ENCODE measurements at regions of chr1 and their contacts with region 1.

Region 1: GRCh38 chr1:179954493-179955297 is at the start of gene CEP350:
- DNase-seq: peak; percentile 93 to 99 (median 98)
- ATAC-seq: peak; percentile 92
- H3K4me3 ChIP-seq: peak within 1 kb of the TSS; percentile 67
- H3K4me3 Mint-ChIP-seq: peak within 1 kb of the TSS; percentile 81 to 97 (median 93)
- H3K27ac ChIP-seq: peak within 1 kb of the TSS; percentile 95
- H3K27ac Mint-ChIP-seq: peak within 1 kb of the TSS; percentile 91 to 99 (median 97)
- H3K4me1 ChIP-seq: peaks cover 32 to 42% of the 10 kb centered on the region in 2 donors
- H3K4me1 Mint-ChIP-seq: peaks cover 34 to 72% (median 62%) of the 10 kb centered on the region in 7 donors
- H3K27me3 ChIP-seq: no peaks in the 10 kb centered on the region
- H3K27me3 Mint-ChIP-seq: no peaks in the 10 kb centered on the region
- total RNA-seq, gene CEP350: 56.1 to 90.1 (median 64.4) TPM

Region 2: DNA sequence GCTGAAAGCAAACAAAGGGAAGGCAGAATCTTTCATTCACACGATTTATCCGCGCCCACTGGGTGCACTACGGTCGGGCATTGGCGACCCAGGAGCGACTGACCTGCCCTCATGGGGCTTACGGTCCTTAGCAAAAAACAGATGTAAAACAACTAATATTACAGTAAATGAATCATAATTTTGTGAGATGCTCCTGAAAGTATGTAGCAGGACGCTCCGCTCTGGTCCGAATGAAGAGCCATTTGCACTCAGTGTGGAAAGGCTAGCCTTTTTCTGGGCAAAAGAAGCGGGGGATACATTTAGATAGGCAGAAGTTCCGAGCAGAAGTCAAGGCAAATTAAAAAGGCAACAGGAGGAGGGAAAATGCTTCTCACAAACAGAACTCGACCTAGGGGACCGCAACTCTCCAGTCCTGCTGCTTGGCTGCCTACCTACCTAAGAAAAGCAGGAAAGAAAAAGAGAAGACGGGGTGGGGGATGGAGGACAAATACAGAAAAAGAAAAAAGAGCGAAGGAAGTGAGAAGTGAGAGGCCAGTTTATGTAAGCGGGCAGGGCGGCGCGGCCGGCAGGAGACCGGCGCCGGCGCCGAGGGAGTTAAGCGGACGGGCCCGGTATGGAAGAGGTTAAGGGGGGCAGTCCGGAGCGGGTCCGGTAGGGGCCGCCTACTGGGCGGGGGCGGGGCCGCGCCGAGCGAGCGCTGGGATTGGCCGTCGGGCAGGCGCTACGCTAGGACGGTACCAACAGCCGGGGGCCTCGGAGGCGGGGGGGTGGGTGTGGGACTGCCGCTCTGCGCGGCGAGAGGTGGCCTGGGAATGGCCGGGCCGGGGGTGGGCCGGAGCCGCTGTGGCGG is 929.3 kb before region 1 on chr1 and contains the start of gene FAM20B:
- CTCF ChIA-PET with region 1: no interaction called
- POLR2A ChIA-PET with region 1: no interaction called
- intact Hi-C with region 1: loop called (anchors 1 to 10 kb)
- DNase-seq: peak; percentile 80 to 89 (median 86)
- ATAC-seq: peak; percentile 95
- H3K4me3 ChIP-seq: peak within 1 kb of the TSS; percentile 71
- H3K4me3 Mint-ChIP-seq: peak within 1 kb of the TSS; percentile 87 to 98 (median 91)
- H3K27ac ChIP-seq: peak within 1 kb of the TSS; percentile 84
- H3K27ac Mint-ChIP-seq: peak within 1 kb of the TSS; percentile 86 to 92 (median 89)
- H3K4me1 ChIP-seq: peaks cover 10 to 17% of the 10 kb centered on the region in 2 donors
- H3K4me1 Mint-ChIP-seq: peaks cover 35 to 60% (median 50%) of the 10 kb centered on the region in 7 donors
- H3K27me3 ChIP-seq: no peaks in the 10 kb centered on the region
- H3K27me3 Mint-ChIP-seq: peaks cover 0 to 31% (median 0%) of the 10 kb centered on the region in 5 donors
- total RNA-seq, gene FAM20B: 14.3 to 27.9 (median 25.2) TPM

Region 3: DNA sequence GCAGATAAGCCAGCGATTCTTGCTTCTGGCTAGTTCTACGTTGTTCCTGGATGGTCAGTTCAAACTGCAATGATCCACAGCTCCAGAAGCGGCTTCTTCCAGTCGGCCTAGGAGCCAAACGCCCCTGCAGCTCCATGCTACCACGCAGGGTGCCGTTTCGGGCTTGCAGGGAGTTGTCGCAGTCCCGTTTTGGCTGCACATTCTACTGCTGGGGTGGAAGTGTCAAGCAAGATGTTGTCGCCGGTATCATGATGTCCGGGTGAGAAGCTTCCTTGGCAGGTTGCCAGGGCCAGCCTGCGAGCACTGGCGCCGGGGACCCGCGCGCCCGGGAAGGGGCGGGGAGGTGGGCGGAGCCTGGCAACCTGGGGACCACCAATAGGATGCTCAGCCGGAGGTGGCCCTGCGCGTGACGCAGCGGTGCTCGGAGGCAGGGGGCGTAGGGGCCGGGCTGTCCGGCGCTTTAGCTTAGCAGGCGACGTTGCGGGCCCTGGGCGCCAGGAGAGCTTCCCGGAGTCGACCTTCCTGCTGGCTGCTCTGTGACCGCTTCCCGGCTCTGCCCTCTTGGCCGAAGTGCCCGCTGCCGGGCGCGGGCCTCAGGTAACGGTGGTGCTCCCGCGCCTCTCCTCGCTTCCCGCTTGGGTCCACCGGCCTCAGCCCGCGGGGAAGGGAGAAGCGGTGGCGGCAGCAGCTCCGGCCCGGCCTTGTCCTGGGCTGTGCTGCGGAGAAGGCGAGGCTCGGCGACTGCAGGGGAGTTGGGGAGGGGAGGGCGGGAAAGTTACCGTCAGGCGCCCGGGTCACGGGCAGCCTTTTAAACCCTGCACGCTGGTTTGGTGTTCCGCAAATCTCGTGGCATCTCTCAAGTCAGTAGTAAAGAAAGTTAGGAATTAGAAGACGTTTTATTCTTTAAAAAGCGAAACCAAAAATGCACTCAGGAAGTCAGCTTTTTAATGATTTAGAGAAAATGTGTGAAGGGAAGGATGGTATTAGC is 661.1 kb before region 1 on chr1 and contains the start of gene SOAT1:
- CTCF ChIA-PET with region 1: no interaction called
- POLR2A ChIA-PET with region 1: no interaction called
- intact Hi-C with region 1: loop called in 1 of 2 experiments (anchors 1 kb)
- DNase-seq: peak; percentile 85 to 94 (median 90)
- ATAC-seq: peak; percentile 98
- H3K4me3 ChIP-seq: peak within 1 kb of the TSS; percentile 78
- H3K4me3 Mint-ChIP-seq: peak within 1 kb of the TSS; percentile 83 to 97 (median 92)
- H3K27ac ChIP-seq: peak within 1 kb of the TSS; percentile 96
- H3K27ac Mint-ChIP-seq: peak within 1 kb of the TSS; percentile 79 to 97 (median 93)
- H3K4me1 ChIP-seq: peaks cover 21 to 33% of the 10 kb centered on the region in 2 donors
- H3K4me1 Mint-ChIP-seq: peaks cover 28 to 51% (median 45%) of the 10 kb centered on the region in 7 donors
- H3K27me3 ChIP-seq: no peaks in the 10 kb centered on the region
- H3K27me3 Mint-ChIP-seq: no peaks in the 10 kb centered on the region
- total RNA-seq, gene SOAT1: 40.6 to 52.8 (median 45.0) TPM

Region 4: GRCh38 chr1:179990847-179991246 is 36.2 kb after region 1 on chr1:
- CTCF ChIA-PET with region 1: no interaction called
- POLR2A ChIA-PET with region 1: interaction called, 3 read pairs
- intact Hi-C with region 1: loop called in 1 of 2 experiments (anchors 5 kb)
- DNase-seq: no peak
- ATAC-seq: no peak
- H3K4me3 ChIP-seq: no peak overlapping the region
- H3K4me3 Mint-ChIP-seq: no peak overlapping the region
- H3K27ac ChIP-seq: no peak overlapping the region
- H3K27ac Mint-ChIP-seq: no peak overlapping the region
- H3K4me1 ChIP-seq: no peaks in the 10 kb centered on the region
- H3K4me1 Mint-ChIP-seq: peaks cover 0 to 11% (median 2%) of the 10 kb centered on the region in 7 donors
- H3K27me3 ChIP-seq: no peaks in the 10 kb centered on the region
- H3K27me3 Mint-ChIP-seq: no peaks in the 10 kb centered on the region

Region 5: GRCh38 chr1:180502360-180503273 is 547.9 kb after region 1 on chr1 and contains the start of gene ACBD6:
- CTCF ChIA-PET with region 1: no interaction called
- POLR2A ChIA-PET with region 1: interaction called, 3 read pairs
- intact Hi-C with region 1: loop called in 1 of 2 experiments (anchors 1 kb)
- DNase-seq: peak; percentile 80 to 92 (median 89)
- ATAC-seq: peak; percentile 95
- H3K4me3 ChIP-seq: peak within 1 kb of the TSS; percentile 85
- H3K4me3 Mint-ChIP-seq: peak within 1 kb of the TSS; percentile 89 to 100 (median 97)
- H3K27ac ChIP-seq: peak within 1 kb of the TSS; percentile 79
- H3K27ac Mint-ChIP-seq: peak within 1 kb of the TSS; percentile 91 to 99 (median 98)
- H3K4me1 ChIP-seq: peaks cover 10 to 18% of the 10 kb centered on the region in 2 donors
- H3K4me1 Mint-ChIP-seq: peaks cover 17 to 55% (median 38%) of the 10 kb centered on the region in 7 donors
- H3K27me3 ChIP-seq: no peaks in the 10 kb centered on the region
- H3K27me3 Mint-ChIP-seq: peaks cover 0 to 5% (median 0%) of the 10 kb centered on the region in 5 donors
- total RNA-seq, gene ACBD6: 44.2 to 75.7 (median 47.3) TPM

Region 6: DNA sequence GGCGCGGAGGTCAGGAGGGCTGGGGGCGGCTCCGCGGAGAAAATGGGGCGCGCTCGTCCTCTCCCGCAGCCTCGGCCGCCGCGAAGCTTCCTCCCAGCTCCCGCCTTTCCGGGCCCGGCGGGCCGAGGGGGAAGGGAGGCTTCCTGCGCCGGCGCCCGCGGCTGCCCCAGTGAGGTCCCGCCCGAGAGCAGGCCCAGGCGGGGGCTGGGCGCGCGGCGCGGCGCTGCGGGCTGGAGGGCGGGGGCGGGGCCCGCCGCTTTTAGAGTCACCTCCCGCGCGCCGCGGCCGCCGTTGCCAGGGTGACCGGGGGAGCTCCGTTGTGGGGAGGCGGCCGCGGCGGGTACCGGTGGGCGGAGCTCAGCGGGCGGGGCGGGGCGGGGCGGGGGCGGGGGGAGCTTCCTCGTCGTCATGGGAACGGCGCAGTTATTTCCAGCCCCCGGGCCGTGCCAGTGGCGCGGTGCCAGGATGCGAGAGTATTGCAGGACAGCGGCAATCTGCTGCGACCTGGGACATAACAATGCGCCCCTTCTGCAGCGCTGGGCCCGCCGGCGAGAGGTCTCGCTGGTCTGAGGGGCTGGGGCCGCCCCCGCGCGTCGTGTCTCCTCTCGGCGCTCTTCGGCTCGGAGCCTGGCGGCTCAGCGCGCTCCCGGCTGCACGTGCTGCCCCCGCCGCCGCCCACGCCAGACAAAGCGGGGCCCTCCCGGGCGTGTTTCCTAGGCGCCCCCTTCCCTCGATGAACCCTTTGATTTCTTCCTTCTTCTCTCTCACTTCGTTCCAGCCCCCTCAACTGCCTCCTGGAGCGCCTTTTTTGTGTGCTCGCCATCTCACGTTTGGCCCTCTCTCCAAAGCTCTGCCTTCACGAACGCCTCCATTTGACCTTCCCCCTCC is 1150.7 kb after region 1 on chr1:
- CTCF ChIA-PET with region 1: no interaction called
- POLR2A ChIA-PET with region 1: no interaction called
- intact Hi-C with region 1: loop called in 1 of 2 experiments (anchors 10 kb)
- DNase-seq: peak; percentile 81 to 94 (median 90)
- ATAC-seq: peak; percentile 94
- H3K4me3 ChIP-seq: peak overlapping the region; percentile 61
- H3K4me3 Mint-ChIP-seq: peak overlapping the region; percentile 84 to 96 (median 91)
- H3K27ac ChIP-seq: peak overlapping the region; percentile 85
- H3K27ac Mint-ChIP-seq: peak overlapping the region; percentile 69 to 97 (median 89)
- H3K4me1 ChIP-seq: peaks cover 16 to 20% of the 10 kb centered on the region in 2 donors
- H3K4me1 Mint-ChIP-seq: peaks cover 22 to 76% (median 61%) of the 10 kb centered on the region in 7 donors
- H3K27me3 ChIP-seq: no peaks in the 10 kb centered on the region
- H3K27me3 Mint-ChIP-seq: peaks cover 0 to 43% (median 0%) of the 10 kb centered on the region in 5 donors